ENCODE measurements at regions of chr22 and their contacts with region 1.

Region 1: GRCh38 chr22:35627264-35628041 is 10.3 kb upstream of the MB start:
- DNase-seq: peak; percentile 87
- ATAC-seq: peak; percentile 70

Region 2: DNA sequence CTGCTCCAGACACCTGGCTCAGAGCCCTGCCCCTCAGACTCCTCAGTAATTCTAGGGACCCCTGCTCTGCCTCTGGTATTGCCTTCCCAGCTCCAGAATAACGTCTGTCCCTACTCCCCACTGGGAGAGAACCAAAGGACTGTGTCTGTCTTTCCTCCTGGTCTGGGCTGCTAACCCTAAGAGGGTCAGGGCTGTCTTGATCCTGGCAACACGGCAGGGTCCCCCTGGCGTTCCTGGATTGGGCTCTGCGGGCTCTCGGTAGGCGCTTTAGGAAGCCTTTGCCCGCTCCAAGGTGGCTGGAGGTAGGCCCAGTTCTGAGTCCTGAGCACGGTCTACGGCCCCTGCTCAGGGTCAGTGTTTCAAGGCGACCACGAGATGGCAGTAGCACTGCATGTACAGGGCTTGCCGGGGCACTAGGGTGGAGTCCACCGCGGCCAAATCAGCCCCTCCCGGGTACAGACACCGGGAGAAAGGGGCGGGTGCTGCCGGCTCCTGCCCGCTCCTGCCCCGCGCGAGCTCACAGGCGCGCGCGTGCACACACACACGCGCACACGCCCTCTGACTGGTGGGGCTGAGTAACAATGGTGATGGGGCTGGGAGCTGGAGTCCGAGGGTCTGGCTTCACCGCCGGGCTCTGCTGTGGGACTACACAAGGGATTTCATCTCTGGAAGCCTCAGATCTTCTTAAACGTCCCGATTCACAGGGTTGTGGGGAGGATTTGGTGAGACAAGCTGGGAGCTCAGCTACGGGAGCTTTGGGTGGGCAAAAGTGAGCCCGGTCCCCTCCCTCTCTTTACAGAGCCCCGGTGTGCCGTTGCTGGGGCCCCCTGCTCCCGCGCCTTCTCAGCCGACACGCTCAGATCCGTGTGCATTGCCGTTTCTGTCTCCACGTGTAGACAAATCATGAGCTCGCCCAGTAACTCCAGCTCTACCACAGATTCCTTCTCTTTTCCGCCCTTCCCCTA is 276.6 kb before region 1 on chr22:
- intact Hi-C with region 1: loop called (anchors 10 kb)
- DNase-seq: peak; percentile 93
- ATAC-seq: peak; percentile 92

Region 3: DNA sequence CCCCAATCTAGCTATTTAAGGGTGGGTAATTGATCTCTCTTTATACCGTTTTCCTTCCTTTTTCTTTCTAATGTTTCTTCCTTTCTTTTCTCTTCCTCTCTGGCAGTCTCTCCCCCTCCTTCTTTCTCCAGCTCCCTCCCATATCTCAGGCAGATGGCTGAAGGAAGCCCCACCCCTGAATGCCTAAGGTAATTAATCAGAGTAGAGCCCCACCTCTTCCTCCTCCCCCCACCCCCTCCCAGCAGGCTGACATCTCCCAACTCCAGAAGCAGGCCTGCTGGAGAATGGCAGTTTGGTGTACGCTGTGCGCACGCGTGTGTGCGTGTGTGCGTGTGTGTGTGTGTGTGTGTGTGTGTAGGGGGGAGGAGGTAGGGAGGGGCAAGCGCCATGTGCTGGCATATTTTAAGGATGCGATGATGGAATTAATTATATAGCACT is 212.9 kb after region 1 on chr22:
- intact Hi-C with region 1: loop called (anchors 10 kb)
- DNase-seq: peak; percentile 87
- ATAC-seq: peak; percentile 69

Region 4: DNA sequence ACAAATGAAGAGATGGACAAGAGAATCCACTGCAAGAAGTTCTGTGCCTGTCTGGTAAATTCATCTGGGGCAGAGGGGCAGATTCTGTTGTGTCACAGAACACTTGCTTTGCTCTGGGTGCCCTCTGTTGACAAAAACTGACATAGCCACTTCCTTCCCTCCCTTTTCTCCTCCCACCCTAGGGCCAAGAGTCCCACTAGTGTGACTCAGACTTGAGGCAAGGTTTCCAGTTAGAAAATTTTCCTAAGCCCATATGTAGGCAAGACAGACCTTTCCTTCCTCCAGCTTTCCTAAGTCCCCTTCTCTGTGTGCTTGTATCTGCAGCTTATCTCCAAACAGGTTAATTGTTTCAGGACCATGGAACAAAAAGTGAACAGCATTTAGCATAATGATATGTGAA is 294.3 kb after region 1 on chr22:
- intact Hi-C with region 1: loop called (anchors 5 kb)
- DNase-seq: no peak
- ATAC-seq: peak; percentile 88

Region 5: GRCh38 chr22:36110306-36110881 is 482.9 kb after region 1 on chr22:
- intact Hi-C with region 1: loop called (anchors 10 kb)
- DNase-seq: no peak
- ATAC-seq: no peak